ENCODE measurements at regions of chr16 and their contacts with region 1.

Region 1: DNA sequence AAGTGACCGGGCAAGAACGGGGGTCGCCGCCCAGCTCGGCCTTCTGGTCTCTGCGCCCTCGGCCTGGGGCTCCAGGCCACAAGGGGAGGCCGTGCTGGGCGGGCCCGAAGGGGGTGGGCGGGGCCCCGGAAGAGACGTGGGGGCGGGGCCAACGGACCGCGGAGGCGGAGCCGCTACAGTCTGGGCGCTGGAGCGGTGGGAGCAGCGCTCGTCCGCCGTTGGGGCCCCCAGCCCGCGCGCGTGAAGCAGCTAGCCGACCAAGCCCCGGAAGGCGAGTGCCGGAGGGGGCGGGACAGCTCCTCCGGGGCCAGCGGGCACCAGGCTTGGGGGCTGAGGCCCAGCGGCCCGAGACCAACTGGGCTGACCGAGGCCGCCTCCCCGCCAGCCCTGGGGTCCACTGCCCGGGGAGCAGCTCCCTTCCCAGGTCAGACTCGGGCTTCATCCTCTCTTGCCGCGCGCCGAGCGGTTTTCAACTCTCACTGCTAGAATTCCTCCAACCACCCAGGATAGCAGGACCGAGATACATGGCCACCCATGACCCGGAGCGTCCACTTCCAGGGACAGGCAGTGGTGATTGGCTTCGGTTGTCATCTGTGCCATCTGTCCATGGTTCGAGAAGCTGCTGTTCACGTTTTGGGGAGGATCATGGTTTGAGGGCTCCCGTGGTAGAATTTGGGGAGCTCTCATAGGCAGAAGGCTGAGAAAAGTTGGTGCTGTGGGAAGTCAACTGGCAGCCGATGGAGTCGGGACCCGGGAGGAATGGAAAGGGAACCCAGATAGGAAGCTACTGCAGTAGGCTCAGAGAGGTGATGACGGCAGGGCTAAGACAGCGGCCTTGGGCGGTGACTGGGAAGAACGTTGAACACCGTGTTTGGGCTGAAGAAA is 44.6 kb upstream of the LCMT1 start:
- DNase-seq: peak; percentile 86
- H3K4me3 Mint-ChIP-seq: peak overlapping the region; percentile 92
- H3K27ac Mint-ChIP-seq: peak overlapping the region; percentile 80
- H3K4me1 Mint-ChIP-seq: peaks cover 42% of the 10 kb centered on the region
- H3K27me3 Mint-ChIP-seq: peaks cover 2% of the 10 kb centered on the region

Region 2: DNA sequence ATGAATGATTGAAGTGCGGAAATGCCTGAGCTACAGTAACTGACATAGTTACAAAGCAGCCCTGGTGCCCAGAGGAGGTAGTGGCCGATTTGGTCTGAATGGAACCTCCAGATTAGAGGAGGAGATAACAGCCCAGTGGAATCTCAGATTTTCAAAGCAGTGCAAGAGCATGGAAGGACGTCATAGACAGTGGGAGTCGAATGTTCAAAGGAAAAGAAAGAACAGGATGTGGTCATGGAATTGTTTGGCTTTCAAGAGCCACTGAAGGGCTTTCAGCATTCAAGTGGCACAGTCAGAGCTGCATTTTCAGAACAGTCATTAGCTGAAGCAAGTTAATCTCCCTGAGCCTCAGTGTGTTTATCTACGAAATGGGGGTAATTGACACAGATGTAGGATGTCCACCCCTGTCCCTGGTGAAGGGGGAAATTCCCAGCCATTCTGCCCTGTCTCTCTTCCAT is 915.5 kb before region 1 on chr16:
- CTCF ChIA-PET with region 1: no interaction called
- intact Hi-C with region 1: no loop called
- DNase-seq: peak; percentile 38
- H3K4me3 Mint-ChIP-seq: no peak overlapping the region
- H3K27ac Mint-ChIP-seq: peak overlapping the region; percentile 57
- H3K4me1 Mint-ChIP-seq: peaks cover 36% of the 10 kb centered on the region
- H3K27me3 Mint-ChIP-seq: no peaks in the 10 kb centered on the region

Region 3: DNA sequence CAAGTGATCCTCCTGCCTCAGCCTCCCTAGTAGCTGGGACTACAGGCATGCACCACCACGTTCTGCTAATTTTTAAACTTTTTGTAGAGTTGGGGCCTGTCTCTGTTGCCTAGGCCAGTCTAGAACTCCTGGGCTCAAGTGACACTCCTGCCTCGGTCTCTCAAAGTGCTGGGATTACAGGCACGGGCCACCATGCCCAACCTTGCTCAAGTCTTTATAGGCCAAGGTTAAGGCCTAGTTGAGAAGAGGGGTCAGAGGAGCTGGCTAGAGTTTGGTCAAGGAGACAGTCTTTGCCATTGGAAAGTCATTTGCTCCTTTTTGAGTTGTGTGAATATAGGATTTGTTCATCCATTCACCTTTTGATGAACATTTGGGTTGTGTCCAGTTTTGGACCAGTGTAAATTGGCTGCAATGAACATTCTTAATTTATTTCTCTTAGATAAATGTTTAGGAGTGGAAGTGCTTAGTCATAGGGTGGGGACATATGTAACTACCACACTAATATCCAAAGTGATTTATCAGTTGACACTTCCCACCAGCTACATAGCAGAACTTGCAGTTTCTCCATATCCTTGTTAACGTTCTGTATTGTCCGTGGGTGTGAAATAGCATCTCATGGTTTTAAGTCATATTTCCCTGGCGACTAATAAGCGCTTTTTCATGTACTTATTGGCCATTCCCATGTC is 21.1 kb before region 1 on chr16:
- CTCF ChIA-PET with region 1: no interaction called
- intact Hi-C with region 1: loop called (anchors 2 kb)
- DNase-seq: no peak
- H3K4me3 Mint-ChIP-seq: no peak overlapping the region
- H3K27ac Mint-ChIP-seq: peak overlapping the region; percentile 8
- H3K4me1 Mint-ChIP-seq: peaks cover 55% of the 10 kb centered on the region
- H3K27me3 Mint-ChIP-seq: no peaks in the 10 kb centered on the region

Region 4: DNA sequence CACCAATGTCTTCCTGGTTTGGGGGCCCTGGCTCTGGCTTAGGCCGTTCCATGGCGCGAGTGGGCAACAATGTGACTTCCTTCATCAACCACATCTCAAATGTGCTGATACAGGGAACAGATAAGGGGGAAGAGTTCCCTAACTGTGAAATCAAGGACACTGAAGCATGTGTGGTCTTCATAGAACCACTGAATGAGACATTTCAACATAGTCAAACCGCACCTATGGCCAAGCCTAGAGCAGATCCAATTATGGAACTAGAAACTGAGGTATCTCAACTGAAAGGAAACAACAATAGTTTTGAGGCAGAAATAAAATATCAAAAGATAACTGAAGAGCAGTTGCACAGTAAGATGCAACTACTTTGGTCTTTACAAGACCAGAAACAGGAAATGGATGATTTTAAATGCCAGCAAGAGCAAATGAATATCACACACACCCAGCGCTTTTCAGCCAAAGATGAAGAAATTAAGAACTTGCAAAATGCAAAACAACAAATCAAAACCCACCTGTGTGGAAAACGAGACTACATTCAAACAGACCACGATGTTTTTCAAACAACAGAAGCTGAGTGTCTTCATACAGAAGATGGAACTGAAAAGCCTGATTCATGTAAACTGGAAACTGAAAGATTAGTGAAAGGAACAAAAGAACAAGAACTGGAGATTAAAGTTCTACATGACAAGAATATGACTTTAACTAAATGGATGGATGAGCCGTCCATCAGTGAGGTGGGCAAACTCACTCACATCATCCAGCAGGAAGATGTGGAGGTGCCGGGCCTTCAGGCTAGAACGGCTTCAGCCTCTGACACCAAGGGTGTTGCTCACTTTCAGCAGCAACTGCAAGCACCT is 26.4 kb after region 1 on chr16:
- CTCF ChIA-PET with region 1: no interaction called
- intact Hi-C with region 1: loop called (anchors 2 kb)
- DNase-seq: peak; percentile 49
- H3K4me3 Mint-ChIP-seq: peak overlapping the region; percentile 53
- H3K27ac Mint-ChIP-seq: peak overlapping the region; percentile 78
- H3K4me1 Mint-ChIP-seq: peaks cover 37% of the 10 kb centered on the region
- H3K27me3 Mint-ChIP-seq: no peaks in the 10 kb centered on the region

Region 5: GRCh38 chr16:25198021-25198420 is 131.0 kb after region 1 on chr16:
- CTCF ChIA-PET with region 1: no interaction called
- intact Hi-C with region 1: no loop called
- DNase-seq: no peak
- H3K4me3 Mint-ChIP-seq: no peak overlapping the region
- H3K27ac Mint-ChIP-seq: no peak overlapping the region
- H3K4me1 Mint-ChIP-seq: no peaks in the 10 kb centered on the region
- H3K27me3 Mint-ChIP-seq: no peaks in the 10 kb centered on the region

Region 6: DNA sequence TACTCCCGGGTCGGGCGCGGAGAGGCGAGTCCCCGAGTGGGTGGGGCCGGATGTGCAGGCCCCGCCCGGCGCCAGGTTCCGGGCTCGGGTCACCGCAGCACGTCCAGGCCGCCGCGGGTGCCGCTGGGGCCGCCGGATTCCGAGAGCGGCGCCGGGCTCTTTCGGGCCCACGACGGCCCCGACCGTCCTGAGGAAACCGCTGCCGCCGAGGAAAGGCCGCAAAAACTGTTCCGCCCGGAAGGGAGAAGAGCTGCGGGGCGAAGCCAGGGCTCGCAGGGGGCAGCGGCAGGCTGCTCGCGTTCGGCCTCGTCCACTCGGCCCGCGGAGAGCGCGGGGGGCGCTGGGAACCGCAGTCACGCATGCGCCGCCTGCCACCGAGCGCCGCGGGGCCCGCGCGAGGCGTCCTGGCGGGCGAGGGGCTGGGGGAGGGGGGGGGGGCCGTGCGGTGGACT is 190.5 kb after region 1 on chr16 and contains the start of gene ZKSCAN2:
- CTCF ChIA-PET with region 1: no interaction called
- intact Hi-C with region 1: loop called (anchors 2 kb)
- DNase-seq: peak; percentile 87
- H3K4me3 Mint-ChIP-seq: peak within 1 kb of the TSS; percentile 89
- H3K27ac Mint-ChIP-seq: peak within 1 kb of the TSS; percentile 97
- H3K4me1 Mint-ChIP-seq: peaks cover 61% of the 10 kb centered on the region
- H3K27me3 Mint-ChIP-seq: no peaks in the 10 kb centered on the region
- total RNA-seq, gene ZKSCAN2: 4.5 to 5.0 TPM

Measured in activated naive CD4-positive, alpha-beta T cell treated with anti-CD3 and anti-CD28 coated beads for 36 hours (primary cell).